Endothelial cell of umbilical vein (primary cell): ENCODE measurements at regions of chr11 and their contacts with region 1.

Region 1: DNA sequence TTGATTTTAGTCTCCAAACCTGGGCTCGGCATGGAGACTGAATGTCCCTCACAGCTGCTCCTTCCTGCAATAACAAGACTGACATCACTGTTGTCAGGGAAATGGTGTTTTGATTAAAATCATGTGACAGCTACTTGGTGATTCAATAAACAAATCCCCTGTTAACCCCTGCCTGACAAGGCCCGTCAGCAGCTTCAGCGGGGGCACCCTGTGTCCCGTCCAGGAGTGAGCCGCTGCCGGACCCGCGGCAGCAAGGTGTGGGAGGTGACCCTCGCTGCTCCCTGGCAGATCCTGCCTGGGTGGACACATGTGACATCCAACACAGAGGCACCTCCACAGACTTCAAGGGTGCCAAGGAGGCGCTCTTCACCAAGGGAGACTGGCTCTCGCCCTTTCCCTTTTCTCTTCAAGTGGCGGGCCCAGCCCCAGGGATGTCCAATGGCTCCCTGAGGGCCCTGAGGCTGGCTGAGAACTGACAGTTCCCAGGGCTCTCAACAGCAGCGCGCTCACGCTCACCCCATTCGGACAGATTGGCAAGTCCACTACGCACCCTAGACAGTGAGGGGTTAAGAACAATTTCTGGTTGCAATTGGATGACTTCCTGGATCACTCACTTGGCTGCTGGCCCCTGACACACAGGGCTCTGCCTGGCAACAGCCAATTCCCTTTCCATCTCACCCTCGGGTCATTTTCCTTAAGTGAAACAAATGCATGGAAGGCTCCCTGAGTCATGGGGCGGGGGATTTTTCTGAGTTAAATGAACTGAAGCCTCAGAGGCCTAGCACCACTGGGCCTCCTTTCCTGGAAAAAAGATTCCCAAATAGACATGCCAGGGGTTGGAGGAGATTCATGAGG is 30.7 kb downstream of the PPP2R1B start:
- DNase-seq: peak; percentile 98
- H3K4me3 ChIP-seq: no peak overlapping the region
- H3K27ac ChIP-seq: peak overlapping the region; percentile 85
- H3K4me1 ChIP-seq: peaks cover 59% of the 10 kb centered on the region
- H3K27me3 ChIP-seq: no peaks in the 10 kb centered on the region
- CTCF ChIP-seq: no peak
- POLR2A ChIP-seq: peak; percentile 67

Region 2: DNA sequence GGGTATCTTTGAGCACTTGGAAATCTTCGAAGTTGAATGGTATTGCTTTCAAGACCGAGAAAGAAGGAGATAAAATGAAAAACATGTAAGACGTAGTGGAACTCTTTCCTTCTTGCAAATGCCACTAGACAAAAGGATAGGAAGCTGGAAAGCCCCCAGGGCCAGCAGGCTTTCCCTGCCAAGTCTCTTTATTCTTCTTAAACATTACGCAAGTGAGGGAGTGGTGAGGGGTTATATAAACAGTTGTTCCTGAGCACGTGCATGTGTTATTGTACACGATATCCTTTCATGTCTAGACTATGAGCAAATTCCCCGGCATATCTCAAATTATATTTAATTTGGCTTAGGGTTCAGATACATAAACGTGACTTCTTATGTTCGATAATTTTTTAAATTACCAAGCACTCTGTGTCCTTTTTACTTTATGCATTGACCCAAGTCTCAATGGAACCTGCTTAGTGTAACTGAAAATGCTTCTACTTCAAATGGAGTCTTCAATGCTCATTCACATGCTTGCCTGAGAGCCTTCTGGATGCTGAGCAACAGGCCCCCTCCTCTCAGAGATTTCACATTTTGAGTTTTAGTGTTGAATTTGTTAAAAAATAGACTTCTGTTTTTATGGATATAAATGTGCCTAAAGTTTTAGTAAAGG is 28.3 kb before region 1 on chr11:
- CTCF ChIA-PET with region 1: no interaction called
- POLR2A ChIA-PET with region 1: interaction called, 8 read pairs
- dilution Hi-C with region 1: no loop called
- intact Hi-C with region 1: loop called (anchors 1 kb)
- DNase-seq: peak; percentile 99
- H3K4me3 ChIP-seq: no peak overlapping the region
- H3K27ac ChIP-seq: peak overlapping the region; percentile 77
- H3K4me1 ChIP-seq: peaks cover 15% of the 10 kb centered on the region
- H3K27me3 ChIP-seq: no peaks in the 10 kb centered on the region
- CTCF ChIP-seq: no peak
- POLR2A ChIP-seq: peak; percentile 24

Region 3: DNA sequence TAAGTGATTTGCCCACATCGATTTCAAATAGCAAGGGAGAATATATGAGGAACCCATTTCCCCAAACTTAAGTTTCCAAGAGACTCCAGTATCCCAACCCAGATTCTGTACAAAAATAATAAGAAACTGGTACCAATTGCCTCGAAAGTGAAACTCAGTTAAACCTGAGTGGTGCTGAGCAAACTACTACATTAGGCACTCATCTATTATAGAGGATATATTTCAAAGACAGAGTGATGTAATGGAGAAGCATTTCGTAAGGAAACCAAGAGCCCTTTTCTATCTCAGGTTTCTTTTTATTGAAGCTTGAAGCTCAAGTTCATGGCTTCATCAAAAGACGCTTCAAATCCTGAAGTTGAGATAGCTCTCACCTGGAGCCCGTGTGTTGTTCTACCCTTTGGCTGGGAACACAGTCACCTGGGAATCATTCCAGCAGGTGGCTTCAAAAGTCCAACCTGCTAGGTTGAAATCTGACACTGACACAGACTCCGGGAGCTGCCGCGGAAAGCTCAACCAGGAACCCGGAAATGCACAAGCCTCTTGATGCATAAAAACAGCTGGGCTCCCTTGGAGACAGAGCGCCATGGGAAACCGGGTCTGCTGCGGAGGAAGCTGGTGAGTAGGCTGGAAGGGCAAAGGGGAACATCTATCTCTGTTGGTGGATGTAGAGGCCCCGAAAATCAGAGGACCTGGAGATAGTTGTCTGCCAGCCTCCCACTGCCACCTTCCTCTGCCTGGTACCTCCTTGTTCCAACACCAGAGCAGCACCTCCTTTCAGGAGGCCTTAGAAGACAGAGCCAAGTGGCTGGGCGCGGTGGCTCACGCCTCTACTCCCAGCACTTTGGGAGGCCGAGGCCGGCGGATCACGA is 183.1 kb after region 1 on chr11 and contains the start of gene C11orf52:
- CTCF ChIA-PET with region 1: no interaction called
- POLR2A ChIA-PET with region 1: no interaction called
- dilution Hi-C with region 1: no loop called
- intact Hi-C with region 1: no loop called
- DNase-seq: peak; percentile 61
- H3K4me3 ChIP-seq: no peak within 1 kb of the TSS
- H3K27ac ChIP-seq: no peak within 1 kb of the TSS
- H3K4me1 ChIP-seq: peaks cover 17% of the 10 kb centered on the region
- H3K27me3 ChIP-seq: no peaks in the 10 kb centered on the region
- CTCF ChIP-seq: no peak
- POLR2A ChIP-seq: no peak
- total RNA-seq, gene C11orf52: 0.31 and 0.99 TPM in 2 replicates